OCI-LY7 (cell line): ENCODE measurements at regions of chr1 and their contacts with region 1.

Region 1: GRCh38 chr1:171644805-171645483 is 7.5 kb downstream of the MYOC start:
- DNase-seq: peak; percentile 80
- H3K4me3 ChIP-seq: no peak overlapping the region
- H3K27ac ChIP-seq: no peak overlapping the region
- H3K4me1 ChIP-seq: no peaks in the 10 kb centered on the region
- CTCF ChIP-seq: peak; percentile 86

Region 2: DNA sequence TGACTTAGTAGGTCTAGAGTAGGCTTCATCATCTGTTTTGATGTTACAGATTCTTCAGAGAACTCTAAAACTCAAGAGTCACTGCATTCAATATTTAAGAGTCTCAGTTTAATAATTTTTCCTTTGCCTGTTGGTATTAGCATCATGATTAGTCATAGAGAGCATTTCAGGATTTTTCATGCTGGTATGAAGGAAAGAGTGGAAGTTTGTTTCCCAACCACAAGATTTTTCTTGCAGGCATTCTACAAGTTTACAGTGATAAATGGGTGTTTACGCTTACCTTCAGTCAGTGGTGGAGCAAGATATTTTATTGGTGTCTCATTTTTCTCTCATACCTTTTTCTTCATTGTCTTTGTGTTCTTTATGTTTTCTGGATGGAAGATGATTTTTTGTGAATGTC is 81.3 kb before region 1 on chr1:
- CTCF ChIA-PET with region 1: no interaction called
- POLR2A ChIA-PET with region 1: no interaction called
- intact Hi-C with region 1: no loop called
- DNase-seq: no peak
- H3K4me3 ChIP-seq: no peak overlapping the region
- H3K27ac ChIP-seq: no peak overlapping the region
- H3K4me1 ChIP-seq: no peaks in the 10 kb centered on the region
- CTCF ChIP-seq: no peak

Region 3: GRCh38 chr1:171576144-171576543 is 68.8 kb before region 1 on chr1:
- CTCF ChIA-PET with region 1: no interaction called
- POLR2A ChIA-PET with region 1: no interaction called
- intact Hi-C with region 1: no loop called
- DNase-seq: no peak
- H3K4me3 ChIP-seq: no peak overlapping the region
- H3K27ac ChIP-seq: no peak overlapping the region
- H3K4me1 ChIP-seq: no peaks in the 10 kb centered on the region
- CTCF ChIP-seq: no peak

Region 4: DNA sequence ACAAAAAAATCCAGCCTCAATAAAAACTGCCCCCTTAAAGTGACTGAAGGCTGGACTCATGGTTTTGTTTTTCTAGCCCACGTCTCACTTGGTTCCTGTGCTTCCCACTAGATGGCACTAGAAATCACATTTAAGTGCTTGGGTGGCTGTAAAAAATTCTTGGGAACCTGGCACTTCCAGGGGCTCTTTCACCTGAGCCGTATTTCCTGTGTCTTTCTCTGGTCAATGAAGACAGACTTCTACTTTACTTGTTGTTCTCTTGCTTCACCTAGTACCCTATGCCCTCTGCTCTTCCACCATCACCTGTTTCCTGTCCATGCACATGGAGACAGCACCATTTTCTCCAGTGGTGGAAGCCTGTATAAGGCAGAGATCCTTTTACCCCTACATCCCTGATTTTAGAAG is 156.5 kb after region 1 on chr1:
- CTCF ChIA-PET with region 1: no interaction called
- POLR2A ChIA-PET with region 1: no interaction called
- intact Hi-C with region 1: loop called (anchors 1 kb)
- DNase-seq: peak; percentile 41
- H3K4me3 ChIP-seq: no peak overlapping the region
- H3K27ac ChIP-seq: no peak overlapping the region
- H3K4me1 ChIP-seq: no peaks in the 10 kb centered on the region
- CTCF ChIP-seq: peak; percentile 85

Region 5: GRCh38 chr1:171984850-171985485 is 340.0 kb after region 1 on chr1:
- CTCF ChIA-PET with region 1: interaction called, 3 read pairs
- POLR2A ChIA-PET with region 1: no interaction called
- intact Hi-C with region 1: loop called (anchors 1 kb)
- DNase-seq: peak; percentile 40
- H3K4me3 ChIP-seq: no peak overlapping the region
- H3K27ac ChIP-seq: no peak overlapping the region
- H3K4me1 ChIP-seq: no peaks in the 10 kb centered on the region
- CTCF ChIP-seq: peak; percentile 91